Activated CD4-positive, alpha-beta T cell treated with anti-CD3 and anti-CD28 coated beads, Interleukin-2, amount 10 ng/mL, durations not matched to agents 24 days and 14 days (primary cell): ENCODE measurements at regions of chr6 and their contacts with region 1.

Region 1: DNA sequence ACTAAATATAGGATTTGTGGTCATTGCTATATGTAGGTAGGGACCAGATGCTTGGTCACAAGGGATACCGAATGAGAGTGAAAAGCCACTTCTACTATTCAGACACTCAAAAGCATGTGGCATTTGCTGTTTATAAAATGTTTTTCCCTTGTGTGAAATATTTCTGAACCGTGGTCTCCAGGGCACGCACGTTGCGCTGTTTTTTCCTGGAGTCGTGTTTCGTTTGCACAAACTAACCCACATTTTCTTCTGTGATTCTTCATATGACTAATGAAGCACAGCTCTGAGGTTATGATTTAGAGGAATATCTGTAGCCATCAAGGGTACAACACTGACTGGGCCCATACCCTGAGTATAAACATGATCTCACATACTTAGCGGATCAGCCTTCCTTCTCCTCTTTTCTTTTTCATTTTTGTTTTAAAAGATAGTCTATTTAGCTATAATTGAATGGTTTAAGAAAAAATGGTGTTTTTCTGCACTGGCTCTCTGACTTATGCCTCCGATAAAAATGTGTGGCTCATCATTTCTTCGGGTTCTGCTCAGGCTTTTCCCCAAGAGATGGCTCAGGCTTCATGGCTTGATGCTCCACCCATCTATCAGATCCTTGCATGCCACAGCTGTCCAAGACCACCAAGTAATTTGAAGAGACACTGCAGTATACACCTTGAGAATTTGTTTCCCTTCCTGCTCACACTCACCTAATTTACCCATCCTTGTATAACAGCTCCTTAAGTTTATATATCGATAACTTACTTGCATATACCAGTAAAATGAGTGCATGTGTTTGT is 59.9 kb upstream of the HBS1L start:
- DNase-seq: peak; percentile 85
- H3K4me3 Mint-ChIP-seq: peak overlapping the region; percentile 64
- H3K27ac Mint-ChIP-seq: peak overlapping the region; percentile 96
- H3K4me1 Mint-ChIP-seq: peaks cover 69% of the 10 kb centered on the region
- H3K27me3 Mint-ChIP-seq: no peaks in the 10 kb centered on the region

Region 2: DNA sequence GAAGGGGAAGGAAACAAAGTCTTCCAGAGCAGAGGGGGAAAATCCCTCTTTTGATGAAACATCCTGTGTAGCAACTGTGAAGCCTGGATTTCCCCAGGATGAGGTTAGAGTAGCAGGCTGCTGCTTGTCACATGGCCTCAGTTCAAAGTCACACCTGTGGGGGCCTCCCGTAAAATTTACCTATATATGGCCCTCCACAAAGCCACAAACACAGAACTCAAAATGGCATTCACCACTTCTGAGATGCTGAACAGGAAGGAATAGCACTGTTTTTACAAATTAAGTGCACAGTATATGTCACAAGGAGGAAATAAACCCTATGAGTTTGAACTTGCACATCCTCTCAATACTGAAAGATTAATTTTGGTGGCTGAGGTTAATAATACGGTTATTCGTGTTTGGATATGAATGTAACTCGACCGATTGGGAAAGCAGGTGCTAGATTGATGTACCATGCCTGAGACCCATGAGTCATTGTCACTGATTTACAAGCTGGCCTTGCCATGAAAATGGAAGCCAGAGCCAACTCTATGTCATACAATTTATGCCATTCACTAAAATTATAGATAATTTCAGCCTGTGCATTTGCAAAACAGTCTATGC is 867.2 kb before region 1 on chr6:
- intact Hi-C with region 1: loop called (anchors 1 kb)
- DNase-seq: peak; percentile 94
- H3K4me3 Mint-ChIP-seq: peak overlapping the region; percentile 54
- H3K27ac Mint-ChIP-seq: peak overlapping the region; percentile 93
- H3K4me1 Mint-ChIP-seq: peaks cover 48% of the 10 kb centered on the region
- H3K27me3 Mint-ChIP-seq: no peaks in the 10 kb centered on the region

Region 3: GRCh38 chr6:135030056-135030473 is 84.5 kb before region 1 on chr6:
- intact Hi-C with region 1: loop called (anchors 1 kb)
- DNase-seq: peak; percentile 76
- H3K4me3 Mint-ChIP-seq: peak overlapping the region; percentile 52
- H3K27ac Mint-ChIP-seq: peak overlapping the region; percentile 80
- H3K4me1 Mint-ChIP-seq: peaks cover 46% of the 10 kb centered on the region
- H3K27me3 Mint-ChIP-seq: no peaks in the 10 kb centered on the region

Region 4: GRCh38 chr6:135094403-135094848 is 20.1 kb before region 1 on chr6:
- intact Hi-C with region 1: loop called (anchors 1 kb)
- DNase-seq: peak; percentile 78
- H3K4me3 Mint-ChIP-seq: peak overlapping the region; percentile 52
- H3K27ac Mint-ChIP-seq: peak overlapping the region; percentile 92
- H3K4me1 Mint-ChIP-seq: peaks cover 44% of the 10 kb centered on the region
- H3K27me3 Mint-ChIP-seq: no peaks in the 10 kb centered on the region

Region 5: DNA sequence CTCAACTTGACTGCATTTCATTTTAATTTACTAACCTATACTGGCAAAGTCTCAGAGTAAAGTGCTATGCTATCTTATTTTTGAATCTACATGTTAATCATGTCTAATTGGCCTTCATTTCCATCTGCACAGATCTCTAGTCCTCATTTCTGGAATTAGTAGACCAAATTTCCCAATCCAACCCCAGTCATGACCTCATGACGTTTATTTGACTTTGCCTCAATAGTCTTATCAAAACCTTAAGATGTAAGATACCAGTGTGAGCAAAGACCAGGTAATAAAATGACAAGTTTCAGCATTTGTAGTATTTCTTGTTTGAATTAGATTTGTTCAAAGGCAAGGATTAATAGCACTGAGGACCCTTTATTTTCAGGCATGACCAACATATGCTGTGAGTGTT is 23.3 kb after region 1 on chr6:
- intact Hi-C with region 1: no loop called
- DNase-seq: no peak
- H3K4me3 Mint-ChIP-seq: no peak overlapping the region
- H3K27ac Mint-ChIP-seq: no peak overlapping the region
- H3K4me1 Mint-ChIP-seq: peaks cover 39% of the 10 kb centered on the region
- H3K27me3 Mint-ChIP-seq: no peaks in the 10 kb centered on the region

Region 6: DNA sequence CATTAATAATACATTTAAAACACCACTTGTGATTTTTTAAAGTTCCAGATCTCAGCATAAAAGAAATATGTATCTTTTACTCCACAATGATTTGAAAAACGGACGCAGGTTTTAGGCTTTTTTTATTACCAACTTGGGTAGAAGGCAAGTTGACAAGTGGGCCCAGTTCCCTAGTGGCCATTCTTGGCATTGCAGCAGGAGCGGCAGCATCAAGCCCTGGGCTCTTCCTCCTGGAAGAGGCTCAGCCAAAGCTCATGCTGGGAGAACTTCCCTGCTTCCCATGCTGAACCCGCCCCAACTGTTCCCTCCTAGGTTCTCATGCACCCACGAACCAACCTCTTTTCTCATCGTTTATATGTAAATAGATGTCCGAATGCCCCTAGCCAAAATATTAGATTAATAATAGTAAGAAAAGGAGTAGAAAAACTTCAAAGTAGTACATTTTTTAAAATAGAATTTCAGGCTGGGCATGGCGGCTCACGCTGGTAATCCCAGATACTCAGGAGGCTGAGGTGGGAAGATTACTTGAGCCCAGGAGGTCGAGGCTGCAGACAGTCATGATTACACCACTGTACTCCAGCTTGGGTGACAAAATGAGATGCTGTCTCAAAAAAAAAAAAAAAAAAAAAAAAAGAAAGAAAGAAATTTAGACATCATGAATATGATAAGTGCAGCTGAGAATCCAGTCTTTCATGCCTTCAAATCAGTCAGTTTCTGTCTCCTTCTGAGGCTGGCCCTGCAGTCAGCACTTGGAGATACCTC is 48.3 kb after region 1 on chr6:
- intact Hi-C with region 1: loop called (anchors 1 kb)
- DNase-seq: peak; percentile 75
- H3K4me3 Mint-ChIP-seq: peak overlapping the region; percentile 61
- H3K27ac Mint-ChIP-seq: peak overlapping the region; percentile 93
- H3K4me1 Mint-ChIP-seq: peaks cover 47% of the 10 kb centered on the region
- H3K27me3 Mint-ChIP-seq: no peaks in the 10 kb centered on the region

Region 7: DNA sequence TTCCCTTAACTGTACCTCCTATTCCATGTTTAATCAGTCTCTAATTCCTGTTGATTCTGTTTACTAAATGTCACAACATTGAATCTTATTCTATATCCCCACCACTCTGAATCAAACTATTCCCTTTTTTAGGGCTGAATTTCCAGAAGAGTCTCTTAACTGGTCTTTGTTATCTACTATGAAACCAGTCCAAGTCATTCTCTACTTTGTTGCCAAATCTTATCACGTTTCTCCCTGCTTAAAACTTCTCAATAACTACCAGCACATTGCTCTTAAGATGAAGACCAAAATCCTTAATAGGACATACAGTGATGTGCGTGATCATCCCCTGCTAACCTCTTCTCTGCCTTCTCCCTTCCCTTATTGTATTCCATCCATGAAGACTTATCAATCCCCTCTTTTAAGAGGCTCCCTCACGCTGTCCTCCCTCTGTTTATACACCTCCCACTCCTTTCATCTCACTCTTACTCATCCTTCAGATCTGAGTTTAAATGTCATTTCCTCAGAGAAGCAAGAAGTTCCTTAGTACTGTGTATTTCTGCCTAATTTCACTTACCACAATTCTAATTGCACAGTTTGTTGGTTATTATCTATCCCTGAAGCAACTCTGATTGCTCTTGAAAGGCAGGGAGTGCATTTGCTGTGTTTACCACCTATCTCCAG is 526.0 kb after region 1 on chr6:
- intact Hi-C with region 1: loop called (anchors 10 kb)
- DNase-seq: no peak
- H3K4me3 Mint-ChIP-seq: peak overlapping the region; percentile 46
- H3K27ac Mint-ChIP-seq: peak overlapping the region; percentile 87
- H3K4me1 Mint-ChIP-seq: peaks cover 53% of the 10 kb centered on the region
- H3K27me3 Mint-ChIP-seq: no peaks in the 10 kb centered on the region